GM23248 (cell line): ENCODE measurements at regions of chr4 and their contacts with region 1.

Region 1: GRCh38 chr4:83771113-83771705 is 235.3 kb downstream of the GPAT3 start:
- DNase-seq: peak; percentile 83
- H3K4me3 ChIP-seq: no peak overlapping the region
- H3K27ac ChIP-seq: no peak overlapping the region
- H3K4me1 ChIP-seq: peaks cover 8% of the 10 kb centered on the region; the same call in 1 of the 2 replicates
- H3K27me3 ChIP-seq: no peaks in the 10 kb centered on the region

Region 2: GRCh38 chr4:83961575-83961974 is 190.4 kb after region 1 on chr4:
- in situ Hi-C with region 1: loop called (anchors 10 kb)
- DNase-seq: peak; percentile 44
- H3K4me3 ChIP-seq: no peak overlapping the region
- H3K27ac ChIP-seq: no peak overlapping the region
- H3K4me1 ChIP-seq: no peaks in the 10 kb centered on the region
- H3K27me3 ChIP-seq: no peaks in the 10 kb centered on the region

Region 3: GRCh38 chr4:84091266-84091665 is 320.1 kb after region 1 on chr4:
- in situ Hi-C with region 1: no loop called
- DNase-seq: no peak
- H3K4me3 ChIP-seq: no peak overlapping the region
- H3K27ac ChIP-seq: no peak overlapping the region
- H3K4me1 ChIP-seq: no peaks in the 10 kb centered on the region
- H3K27me3 ChIP-seq: peaks cover 19% of the 10 kb centered on the region; the same call in 1 of the 2 replicates

Region 4: DNA sequence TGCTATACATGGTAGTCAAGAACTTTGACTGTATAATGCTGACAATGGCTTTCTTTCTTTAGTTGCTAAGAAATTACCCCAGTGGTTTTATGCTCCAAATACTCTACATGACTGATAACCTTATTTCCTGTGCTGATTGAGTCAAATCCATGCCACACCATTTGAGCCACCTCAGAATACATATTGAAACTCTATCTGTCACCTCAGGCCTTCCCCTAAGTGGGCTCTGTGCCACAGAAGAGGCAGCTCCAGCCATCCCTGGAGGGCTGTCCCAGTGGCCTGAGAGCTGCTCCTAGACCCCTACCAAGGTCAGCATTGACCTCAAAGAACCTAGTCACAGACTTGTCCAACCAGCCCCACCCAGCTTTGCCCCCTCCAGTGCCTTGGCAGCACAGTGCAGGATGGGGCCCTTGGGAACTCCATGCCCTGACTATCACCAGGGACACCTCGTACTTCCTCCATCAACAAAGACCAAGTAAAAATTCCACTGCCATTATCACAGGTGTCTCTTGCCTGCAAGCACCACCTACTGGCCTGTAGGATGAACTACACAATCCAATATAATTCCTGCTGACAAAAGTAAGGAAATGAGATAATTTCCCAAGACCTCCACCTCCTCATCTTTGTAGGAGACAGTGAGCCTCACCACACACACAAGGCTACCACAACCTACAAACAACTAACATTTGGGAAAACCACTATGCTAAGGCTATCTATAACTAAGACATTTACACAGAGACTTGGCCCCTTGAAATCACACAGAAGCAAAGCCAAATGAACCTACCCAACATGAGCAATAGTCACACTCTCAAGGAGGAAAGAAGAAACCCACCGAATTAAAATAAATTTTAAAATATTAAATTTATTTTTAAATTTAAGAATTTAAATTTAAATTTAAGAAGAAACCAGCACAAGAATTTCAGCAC is 488.0 kb after region 1 on chr4:
- in situ Hi-C with region 1: loop called (anchors 10 kb)
- DNase-seq: peak; percentile 59
- H3K4me3 ChIP-seq: no peak overlapping the region
- H3K27ac ChIP-seq: no peak overlapping the region
- H3K4me1 ChIP-seq: no peaks in the 10 kb centered on the region
- H3K27me3 ChIP-seq: no peaks in the 10 kb centered on the region

Region 5: DNA sequence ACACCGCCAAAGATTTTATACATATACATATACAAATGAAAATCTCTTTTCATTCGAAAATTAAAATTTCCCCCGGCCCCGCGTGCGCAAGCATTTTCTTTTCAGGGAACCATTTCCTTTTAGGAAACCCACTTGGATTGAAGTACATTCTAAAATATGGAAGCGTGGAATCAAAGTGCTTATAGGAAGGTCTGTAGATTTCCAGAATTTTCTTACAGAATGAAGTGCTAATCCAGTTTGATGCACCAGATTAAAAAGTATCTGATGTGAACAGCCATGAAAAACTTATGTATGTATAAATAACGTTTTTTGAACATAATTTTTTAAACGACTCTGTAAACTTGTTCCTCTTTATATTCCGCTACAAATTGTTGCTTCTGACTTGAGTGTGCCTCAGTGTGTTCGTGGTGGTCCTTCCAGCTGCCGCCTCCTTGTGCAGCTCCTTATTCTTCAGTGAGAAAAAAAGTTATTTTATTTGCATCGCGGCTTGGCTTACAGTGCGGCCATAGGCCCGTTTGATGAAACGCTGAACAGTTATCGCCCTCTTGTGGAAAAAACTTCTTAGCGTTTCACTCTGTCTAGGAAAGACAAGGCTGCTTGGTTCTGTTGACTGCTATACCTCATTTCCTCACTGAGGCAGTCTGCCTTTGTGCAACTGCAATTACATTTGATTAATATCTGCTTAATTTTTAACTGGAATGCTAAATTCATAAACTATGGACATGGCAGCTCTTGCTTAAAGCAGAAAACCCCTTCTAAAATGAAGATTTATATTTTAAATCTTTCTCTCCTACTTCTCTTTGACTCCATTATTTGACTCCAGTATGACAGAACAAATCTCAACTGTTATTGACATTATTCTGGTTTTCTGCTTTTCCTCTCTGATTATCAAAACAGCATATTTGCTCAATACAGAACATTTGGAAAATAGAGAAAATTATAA is 732.6 kb after region 1 on chr4:
- in situ Hi-C with region 1: loop called (anchors 25 kb)
- DNase-seq: peak; percentile 83
- H3K4me3 ChIP-seq: no peak overlapping the region
- H3K27ac ChIP-seq: no peak overlapping the region
- H3K4me1 ChIP-seq: no peaks in the 10 kb centered on the region
- H3K27me3 ChIP-seq: peaks cover 86% of the 10 kb centered on the region